Activated B cell treated with CpG ODN at 0.5 μM for 24 hours (primary cell): ENCODE measurements at regions of chr16 and their contacts with region 1.

Region 1: GRCh38 chr16:24729362-24729984 is at the start of gene TNRC6A:
- DNase-seq: peak; percentile 90
- ATAC-seq: peak; percentile 79
- H3K4me3 Mint-ChIP-seq: peak within 1 kb of the TSS; percentile 99
- H3K27ac Mint-ChIP-seq: peak within 1 kb of the TSS; percentile 97
- H3K4me1 Mint-ChIP-seq: peaks cover 38% of the 10 kb centered on the region
- H3K27me3 Mint-ChIP-seq: no peaks in the 10 kb centered on the region
- CTCF ChIP-seq: no peak
- total RNA-seq, gene TNRC6A: 57.9 and 68.5 TPM in 2 replicates

Region 2: GRCh38 chr16:23149349-23149996 is 1580.0 kb before region 1 on chr16 and contains the start of gene USP31:
- CTCF ChIA-PET with region 1: no interaction called
- POLR2A ChIA-PET with region 1: no interaction called
- intact Hi-C with region 1: loop called (anchors 2 kb)
- DNase-seq: peak; percentile 82
- ATAC-seq: peak; percentile 96
- H3K4me3 Mint-ChIP-seq: peak within 1 kb of the TSS; percentile 91
- H3K27ac Mint-ChIP-seq: peak within 1 kb of the TSS; percentile 81
- H3K4me1 Mint-ChIP-seq: peaks cover 11% of the 10 kb centered on the region
- H3K27me3 Mint-ChIP-seq: peaks cover 3% of the 10 kb centered on the region
- CTCF ChIP-seq: no peak
- total RNA-seq, gene USP31: 3.6 and 4.6 TPM in 2 replicates

Region 3: GRCh38 chr16:24539291-24539849 is 190.1 kb before region 1 on chr16 and contains the start of gene RBBP6:
- CTCF ChIA-PET with region 1: no interaction called
- POLR2A ChIA-PET with region 1: interaction called, 7 read pairs
- intact Hi-C with region 1: loop called (anchors 1 kb)
- DNase-seq: peak; percentile 96
- ATAC-seq: peak; percentile 92
- H3K4me3 Mint-ChIP-seq: peak within 1 kb of the TSS; percentile 100
- H3K27ac Mint-ChIP-seq: peak within 1 kb of the TSS; percentile 100
- H3K4me1 Mint-ChIP-seq: peaks cover 43% of the 10 kb centered on the region
- H3K27me3 Mint-ChIP-seq: no peaks in the 10 kb centered on the region
- CTCF ChIP-seq: no peak
- total RNA-seq, gene RBBP6: 85.3 and 85.8 TPM in 2 replicates

Region 4: GRCh38 chr16:24626256-24626655 is 103.2 kb before region 1 on chr16:
- CTCF ChIA-PET with region 1: no interaction called
- POLR2A ChIA-PET with region 1: no interaction called
- intact Hi-C with region 1: no loop called
- DNase-seq: no peak
- ATAC-seq: no peak
- H3K4me3 Mint-ChIP-seq: no peak overlapping the region
- H3K27ac Mint-ChIP-seq: no peak overlapping the region
- H3K4me1 Mint-ChIP-seq: no peaks in the 10 kb centered on the region
- H3K27me3 Mint-ChIP-seq: no peaks in the 10 kb centered on the region
- CTCF ChIP-seq: no peak

Region 5: GRCh38 chr16:24645739-24646645 is 83.5 kb before region 1 on chr16:
- CTCF ChIA-PET with region 1: no interaction called
- POLR2A ChIA-PET with region 1: no interaction called
- intact Hi-C with region 1: no loop called
- DNase-seq: no peak
- ATAC-seq: no peak
- H3K4me3 Mint-ChIP-seq: no peak overlapping the region
- H3K27ac Mint-ChIP-seq: no peak overlapping the region
- H3K4me1 Mint-ChIP-seq: no peaks in the 10 kb centered on the region
- H3K27me3 Mint-ChIP-seq: peaks cover 11% of the 10 kb centered on the region
- CTCF ChIP-seq: no peak

Region 6: DNA sequence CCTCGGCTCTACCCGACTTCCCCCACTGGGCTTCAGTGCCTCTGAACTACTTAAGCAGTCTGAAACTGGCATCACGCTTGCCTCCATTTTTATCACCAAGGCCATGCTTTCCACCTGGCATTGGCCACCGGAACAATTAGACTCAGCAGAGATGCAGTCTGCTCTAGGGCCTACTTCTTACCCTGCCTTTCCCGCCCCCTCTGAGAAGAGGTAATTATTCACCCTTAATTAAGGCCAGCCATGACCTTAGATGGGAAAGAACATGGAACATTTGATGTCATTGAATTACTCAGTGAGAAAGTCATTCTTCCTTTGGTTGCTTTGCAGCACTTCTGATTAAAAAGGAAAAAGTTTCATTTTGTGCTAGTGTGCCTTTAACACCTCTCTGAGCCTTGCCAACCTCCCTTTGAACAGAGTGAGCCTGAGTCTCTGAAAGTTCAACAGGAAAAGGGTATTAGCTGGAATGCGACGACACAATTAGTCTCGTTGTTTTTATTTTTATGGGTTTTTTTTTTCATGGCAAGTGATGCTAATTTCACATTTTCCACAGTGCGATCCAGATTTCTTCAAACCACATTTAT is 60.9 kb before region 1 on chr16:
- CTCF ChIA-PET with region 1: no interaction called
- POLR2A ChIA-PET with region 1: no interaction called
- intact Hi-C with region 1: loop called (anchors 2 kb)
- DNase-seq: no peak
- ATAC-seq: no peak
- H3K4me3 Mint-ChIP-seq: no peak overlapping the region
- H3K27ac Mint-ChIP-seq: no peak overlapping the region
- H3K4me1 Mint-ChIP-seq: peaks cover 8% of the 10 kb centered on the region
- H3K27me3 Mint-ChIP-seq: peaks cover 11% of the 10 kb centered on the region
- CTCF ChIP-seq: no peak

Region 7: DNA sequence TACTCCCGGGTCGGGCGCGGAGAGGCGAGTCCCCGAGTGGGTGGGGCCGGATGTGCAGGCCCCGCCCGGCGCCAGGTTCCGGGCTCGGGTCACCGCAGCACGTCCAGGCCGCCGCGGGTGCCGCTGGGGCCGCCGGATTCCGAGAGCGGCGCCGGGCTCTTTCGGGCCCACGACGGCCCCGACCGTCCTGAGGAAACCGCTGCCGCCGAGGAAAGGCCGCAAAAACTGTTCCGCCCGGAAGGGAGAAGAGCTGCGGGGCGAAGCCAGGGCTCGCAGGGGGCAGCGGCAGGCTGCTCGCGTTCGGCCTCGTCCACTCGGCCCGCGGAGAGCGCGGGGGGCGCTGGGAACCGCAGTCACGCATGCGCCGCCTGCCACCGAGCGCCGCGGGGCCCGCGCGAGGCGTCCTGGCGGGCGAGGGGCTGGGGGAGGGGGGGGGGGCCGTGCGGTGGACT is 528.1 kb after region 1 on chr16 and contains the start of gene ZKSCAN2:
- CTCF ChIA-PET with region 1: no interaction called
- POLR2A ChIA-PET with region 1: no interaction called
- intact Hi-C with region 1: loop called (anchors 1 kb)
- DNase-seq: peak; percentile 82
- ATAC-seq: peak; percentile 87
- H3K4me3 Mint-ChIP-seq: peak within 1 kb of the TSS; percentile 95
- H3K27ac Mint-ChIP-seq: peak within 1 kb of the TSS; percentile 93
- H3K4me1 Mint-ChIP-seq: peaks cover 46% of the 10 kb centered on the region
- H3K27me3 Mint-ChIP-seq: no peaks in the 10 kb centered on the region
- CTCF ChIP-seq: no peak
- total RNA-seq, gene ZKSCAN2: 8.3 and 10.3 TPM in 2 replicates